WTC11 (cell line): ENCODE measurements at regions of chr5 and their contacts with region 1.

Region 1: DNA sequence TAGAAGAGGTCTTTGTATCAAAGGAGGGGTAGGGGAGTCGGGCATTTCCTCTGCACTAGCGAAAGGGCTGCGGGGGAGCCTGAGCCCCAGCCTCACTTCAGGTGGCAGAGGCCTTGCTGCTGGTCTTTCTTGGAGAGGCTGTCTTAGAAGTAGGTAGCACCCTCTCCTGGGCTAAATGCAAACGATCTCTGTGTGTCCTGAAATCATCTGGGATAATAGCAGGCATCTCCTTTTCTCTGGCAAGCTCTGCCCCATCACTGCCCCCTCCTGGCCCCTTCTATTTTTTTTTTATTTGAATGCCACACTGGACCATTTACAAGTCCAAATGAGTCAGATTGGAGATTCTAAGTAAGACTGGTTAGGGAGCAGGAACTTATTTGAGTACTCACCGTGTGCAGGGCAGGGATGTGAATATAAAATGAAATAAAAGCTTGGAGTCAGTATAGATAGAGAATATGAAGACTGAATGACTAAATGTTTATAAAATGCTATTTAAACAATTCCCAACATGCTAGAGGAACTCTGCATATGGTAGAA is 137.1 kb downstream of the FGF1 start:
- DNase-seq: peak; percentile 72
- ATAC-seq: peak; percentile 89
- H3K4me3 Mint-ChIP-seq: no peak overlapping the region
- H3K27ac Mint-ChIP-seq: peak overlapping the region; percentile 83; the same call in 1 of the 2 replicates
- H3K4me1 Mint-ChIP-seq: peaks cover 69% of the 10 kb centered on the region
- H3K27me3 Mint-ChIP-seq: no peaks in the 10 kb centered on the region
- CTCF ChIP-seq: peak; percentile 72

Region 2: GRCh38 chr5:142151436-142152383 is 397.1 kb before region 1 on chr5:
- CTCF ChIA-PET with region 1: interaction called, 18 read pairs
- POLR2A ChIA-PET with region 1: no interaction called
- DNase-seq: peak; percentile 41
- ATAC-seq: peak; percentile 69
- H3K4me3 Mint-ChIP-seq: no peak overlapping the region
- H3K27ac Mint-ChIP-seq: 0 out of 2 replicates have a peak overlapping the region, but pooled peaks have one; percentile 53
- H3K4me1 Mint-ChIP-seq: peaks cover 51% of the 10 kb centered on the region
- H3K27me3 Mint-ChIP-seq: no peaks in the 10 kb centered on the region
- CTCF ChIP-seq: peak; percentile 85

Region 3: DNA sequence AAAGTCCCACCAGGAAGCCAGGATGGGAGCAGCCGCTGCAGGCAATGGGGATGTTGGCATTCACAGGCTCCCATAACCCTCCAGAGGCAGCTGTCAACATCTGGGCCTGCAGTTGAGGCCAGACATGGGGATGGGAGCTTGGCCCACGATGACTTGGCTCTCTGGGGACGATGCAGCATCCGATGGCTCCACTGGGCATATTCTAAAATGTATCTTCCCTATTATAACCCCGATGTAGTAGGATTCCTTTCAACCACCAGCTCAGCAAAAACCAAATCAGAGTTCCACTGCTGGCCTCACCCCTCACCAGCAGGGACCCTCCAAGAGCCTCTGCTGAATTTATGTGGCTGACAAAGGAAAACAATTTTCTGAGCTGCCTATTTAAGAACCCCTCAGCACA is 231.1 kb before region 1 on chr5:
- CTCF ChIA-PET with region 1: interaction called, 32 read pairs
- POLR2A ChIA-PET with region 1: no interaction called
- DNase-seq: no peak
- ATAC-seq: no peak
- H3K4me3 Mint-ChIP-seq: peak overlapping the region; percentile 96
- H3K27ac Mint-ChIP-seq: peak overlapping the region; percentile 93
- H3K4me1 Mint-ChIP-seq: peaks cover 93% of the 10 kb centered on the region
- H3K27me3 Mint-ChIP-seq: no peaks in the 10 kb centered on the region; the same call in 1 of the 2 replicates
- CTCF ChIP-seq: no peak

Region 4: DNA sequence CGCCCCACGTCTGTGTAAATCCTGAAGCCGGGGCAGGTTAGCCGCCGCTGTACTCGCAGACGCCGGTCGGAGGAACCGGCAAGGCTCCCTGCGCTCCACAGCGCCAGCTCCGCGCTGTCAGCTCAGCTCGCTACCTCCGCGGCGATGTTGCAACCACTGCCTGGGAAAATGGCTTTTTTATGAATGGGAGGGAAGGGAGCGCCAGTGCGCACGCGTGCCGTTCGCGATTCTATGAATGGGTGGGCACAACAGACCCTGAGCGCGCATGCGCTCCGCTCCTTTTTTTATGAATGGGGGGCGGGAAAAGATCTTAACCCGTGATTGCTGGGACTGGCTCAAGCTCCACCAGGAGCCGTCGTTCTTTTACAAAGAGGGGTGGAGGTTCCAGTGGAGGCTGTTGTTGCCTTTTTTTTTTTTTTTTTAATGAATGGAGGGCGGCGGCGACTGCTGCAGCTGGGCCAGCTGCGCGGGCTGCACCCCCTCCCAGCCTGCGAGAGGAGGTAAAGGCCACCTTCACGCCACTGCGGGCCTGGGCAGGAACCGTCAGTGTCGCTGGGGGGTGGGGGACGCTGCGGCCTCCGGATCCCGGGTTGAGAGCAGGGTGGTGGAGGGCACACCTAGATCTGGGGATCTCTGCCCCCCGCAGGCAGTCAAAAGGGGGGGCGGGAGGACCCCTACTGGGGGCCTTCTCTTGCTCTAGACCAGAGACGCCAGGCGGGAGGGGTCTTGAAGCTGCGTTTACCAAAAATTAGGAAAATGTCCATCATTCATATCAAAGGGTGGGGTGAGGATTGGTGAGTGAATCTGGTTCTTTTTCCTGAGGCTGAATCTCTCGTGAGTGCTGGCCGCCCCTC is 223.7 kb before region 1 on chr5 and contains the start of gene SPRY4:
- CTCF ChIA-PET with region 1: interaction called, 59 read pairs
- POLR2A ChIA-PET with region 1: interaction called, 8 read pairs
- DNase-seq: peak; percentile 95
- ATAC-seq: peak; percentile 25
- H3K4me3 Mint-ChIP-seq: peak within 1 kb of the TSS; percentile 96
- H3K27ac Mint-ChIP-seq: peak within 1 kb of the TSS; percentile 93
- H3K4me1 Mint-ChIP-seq: peaks cover 62% of the 10 kb centered on the region
- H3K27me3 Mint-ChIP-seq: no peaks in the 10 kb centered on the region; the same call in 1 of the 2 replicates
- CTCF ChIP-seq: no peak
- total RNA-seq, gene SPRY4: 99.6 to 140 TPM (median 103 TPM) in 3 replicates

Region 5: GRCh38 chr5:142356716-142357473 is 191.9 kb before region 1 on chr5:
- CTCF ChIA-PET with region 1: interaction called, 14 read pairs
- POLR2A ChIA-PET with region 1: interaction called, 3 read pairs
- DNase-seq: peak; percentile 86
- ATAC-seq: peak; percentile 76
- H3K4me3 Mint-ChIP-seq: peak overlapping the region; percentile 64
- H3K27ac Mint-ChIP-seq: peak overlapping the region; percentile 99
- H3K4me1 Mint-ChIP-seq: peaks cover 57% of the 10 kb centered on the region
- H3K27me3 Mint-ChIP-seq: no peaks in the 10 kb centered on the region
- CTCF ChIP-seq: no peak

Region 6: GRCh38 chr5:142492781-142493281 is 56.0 kb before region 1 on chr5:
- CTCF ChIA-PET with region 1: no interaction called
- POLR2A ChIA-PET with region 1: no interaction called
- DNase-seq: no peak
- ATAC-seq: no peak
- H3K4me3 Mint-ChIP-seq: no peak overlapping the region
- H3K27ac Mint-ChIP-seq: peak overlapping the region; percentile 31; the same call in 1 of the 2 replicates
- H3K4me1 Mint-ChIP-seq: peaks cover 26% of the 10 kb centered on the region
- H3K27me3 Mint-ChIP-seq: no peaks in the 10 kb centered on the region
- CTCF ChIP-seq: no peak

Region 7: GRCh38 chr5:142699184-142699720 is 150.4 kb after region 1 on chr5:
- CTCF ChIA-PET with region 1: interaction called, 10 read pairs
- POLR2A ChIA-PET with region 1: no interaction called
- DNase-seq: peak; percentile 94
- ATAC-seq: peak; percentile 75
- H3K4me3 Mint-ChIP-seq: no peak overlapping the region
- H3K27ac Mint-ChIP-seq: no peak overlapping the region
- H3K4me1 Mint-ChIP-seq: peaks cover 59% of the 10 kb centered on the region
- H3K27me3 Mint-ChIP-seq: no peaks in the 10 kb centered on the region
- CTCF ChIP-seq: peak; percentile 90